Stomach (tissue), 19 donors: ENCODE measurements at regions of chr7 and their contacts with region 1.

Region 1: DNA sequence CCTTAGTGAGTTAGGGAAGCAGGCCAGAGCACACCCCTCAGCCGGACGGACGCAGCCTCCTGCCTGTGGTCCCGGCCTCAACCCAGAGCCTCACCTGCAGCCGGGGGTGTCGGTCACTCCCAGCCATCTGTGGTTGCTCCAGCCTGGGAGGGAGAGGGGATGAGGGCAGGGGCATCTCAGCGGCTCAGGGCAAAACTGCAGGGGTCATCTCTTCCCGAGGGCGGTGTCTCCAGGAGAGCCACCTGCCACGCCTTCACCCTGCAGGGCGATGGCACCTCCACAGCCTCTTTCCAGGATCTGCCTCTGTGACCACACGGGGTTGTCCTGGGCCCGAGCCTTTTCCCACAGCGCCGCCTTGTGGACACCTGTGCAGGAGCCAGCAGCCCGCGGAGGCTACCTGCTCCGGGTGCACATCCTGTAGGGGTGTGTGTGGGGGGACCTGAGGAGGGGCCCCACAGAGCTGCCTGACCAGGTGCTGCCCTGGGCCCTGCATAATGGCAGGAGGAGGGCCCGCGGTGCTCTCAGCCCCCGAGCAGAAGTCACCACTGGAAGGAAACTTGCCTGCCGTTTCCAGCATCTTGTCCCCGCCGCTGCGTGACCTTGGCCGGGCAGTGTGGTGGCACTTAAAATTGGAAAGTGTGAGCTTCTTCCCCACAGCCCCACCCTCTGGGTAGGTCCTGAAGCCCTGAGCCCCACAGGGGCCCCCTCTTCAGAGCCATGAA is 21.6 kb upstream of the AP5Z1 start:
- DNase-seq: peak; percentile 88 to 91
- H3K4me3 ChIP-seq: no peak overlapping the region
- H3K27ac ChIP-seq: peak overlapping the region in 1 of 5 donors; percentile 42
- H3K4me1 ChIP-seq: peaks cover 9 to 37% (median 24%) of the 10 kb centered on the region in 4 donors
- H3K27me3 ChIP-seq: no peaks in the 10 kb centered on the region
- CTCF ChIP-seq: peak in 6 of 7 experiments; percentile 42 to 92 (median 88)
- EP300 ChIP-seq: no peak
- POLR2A ChIP-seq: no peak

Region 2: DNA sequence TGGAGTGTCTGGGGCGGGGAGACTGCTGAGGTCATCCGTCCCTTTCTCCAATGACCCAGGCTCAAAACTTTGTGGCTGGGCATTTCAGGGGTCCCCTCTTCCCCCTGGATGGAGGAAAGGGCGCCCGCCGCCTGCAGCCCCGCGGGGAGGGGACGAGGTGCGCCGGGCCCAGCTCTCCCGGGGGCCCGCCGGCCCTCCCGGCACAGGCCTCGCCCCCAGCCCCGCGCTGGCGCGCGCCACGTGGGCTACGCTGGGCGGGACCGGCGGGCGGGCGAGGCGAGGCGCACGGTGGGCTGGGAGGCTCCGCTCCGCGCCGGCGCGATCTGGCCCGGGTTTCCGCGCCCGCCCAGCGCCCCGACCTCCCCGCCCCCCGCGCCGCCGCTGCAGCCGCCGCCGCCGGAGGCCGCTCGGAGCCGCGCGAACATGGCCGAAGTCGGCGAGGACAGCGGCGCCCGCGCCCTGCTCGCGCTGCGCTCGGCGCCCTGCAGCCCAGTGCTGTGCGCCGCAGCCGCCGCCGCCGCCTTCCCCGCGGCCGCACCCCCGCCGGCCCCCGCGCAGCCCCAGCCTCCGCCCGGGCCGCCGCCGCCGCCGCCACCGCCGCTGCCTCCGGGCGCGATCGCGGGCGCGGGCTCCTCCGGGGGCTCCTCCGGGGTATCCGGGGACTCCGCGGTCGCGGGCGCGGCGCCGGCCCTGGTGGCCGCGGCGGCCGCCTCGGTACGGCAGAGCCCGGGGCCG is 71.8 kb before region 1 on chr7 and contains the start of gene FOXK1:
- intact Hi-C with region 1: loop called (anchors 5 kb)
- DNase-seq: peak; percentile 78 to 95
- H3K4me3 ChIP-seq: peak within 1 kb of the TSS; percentile 83 to 95 (median 92)
- H3K27ac ChIP-seq: peak within 1 kb of the TSS; percentile 92 to 96 (median 93)
- H3K4me1 ChIP-seq: peaks cover 11 to 47% (median 37%) of the 10 kb centered on the region in 4 donors
- H3K27me3 ChIP-seq: no peaks in the 10 kb centered on the region
- CTCF ChIP-seq: no peak
- EP300 ChIP-seq: no peak
- POLR2A ChIP-seq: no peak
- total RNA-seq, gene FOXK1: 19.3 to 88.1 (median 27.2) TPM